ENCODE measurements at regions of chr1 and their contacts with region 1.

Region 1: GRCh38 chr1:39117899-39118455 is 86.5 kb upstream of the MACF1 start:
- DNase-seq: no peak
- H3K4me3 ChIP-seq: no peak overlapping the region
- H3K27ac ChIP-seq: no peak overlapping the region
- H3K4me1 ChIP-seq: peaks cover 10% of the 10 kb centered on the region
- H3K27me3 ChIP-seq: no peaks in the 10 kb centered on the region
- CTCF ChIP-seq: no peak

Region 2: GRCh38 chr1:39105061-39105840 is 12.7 kb before region 1 on chr1:
- CTCF ChIA-PET with region 1: no interaction called
- POLR2A ChIA-PET with region 1: no interaction called
- intact Hi-C with region 1: loop called (anchors 1 kb)
- DNase-seq: peak; percentile 77
- H3K4me3 ChIP-seq: peak overlapping the region; percentile 82
- H3K27ac ChIP-seq: peak overlapping the region; percentile 88
- H3K4me1 ChIP-seq: peaks cover 58% of the 10 kb centered on the region
- H3K27me3 ChIP-seq: no peaks in the 10 kb centered on the region
- CTCF ChIP-seq: no peak

Region 3: DNA sequence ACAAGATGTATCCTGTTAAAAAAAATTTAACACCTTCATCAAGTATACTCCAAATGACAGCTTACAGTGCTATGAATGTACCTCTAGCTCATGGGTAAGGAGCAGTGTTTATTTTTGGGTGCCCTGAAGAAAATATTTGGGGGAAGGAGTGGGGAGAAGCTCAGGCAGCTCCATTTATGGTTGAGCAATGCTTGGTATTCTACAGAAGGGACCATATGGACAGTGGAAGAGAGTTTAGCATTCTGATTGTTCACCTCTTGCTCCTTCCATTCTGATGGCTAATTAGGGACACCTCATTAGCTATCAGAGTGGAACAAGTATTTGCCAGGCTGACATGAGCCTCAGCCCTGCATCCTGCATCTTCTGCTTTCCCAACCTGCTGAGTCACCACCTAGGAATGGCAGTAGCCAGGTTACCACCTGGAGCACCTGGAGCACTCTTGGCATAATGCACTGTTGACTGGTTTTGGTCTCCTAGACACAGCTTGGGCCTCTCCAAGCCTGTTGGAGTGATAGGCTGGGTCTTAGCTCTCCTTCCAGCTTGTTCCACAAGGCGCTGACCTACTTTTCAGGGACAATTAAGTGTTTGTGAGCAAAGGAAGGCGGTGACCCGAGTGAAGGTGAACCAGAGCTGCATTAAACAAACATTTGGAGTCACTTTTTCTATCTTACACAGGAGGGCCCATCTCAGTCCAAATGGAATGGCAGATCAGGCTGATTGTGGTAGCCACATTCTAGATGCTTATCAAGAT is 24.6 kb after region 1 on chr1:
- CTCF ChIA-PET with region 1: no interaction called
- POLR2A ChIA-PET with region 1: no interaction called
- intact Hi-C with region 1: no loop called
- DNase-seq: no peak
- H3K4me3 ChIP-seq: no peak overlapping the region
- H3K27ac ChIP-seq: no peak overlapping the region
- H3K4me1 ChIP-seq: peaks cover 30% of the 10 kb centered on the region
- H3K27me3 ChIP-seq: no peaks in the 10 kb centered on the region
- CTCF ChIP-seq: no peak

Region 4: GRCh38 chr1:39183503-39184353 is 65.8 kb after region 1 on chr1:
- CTCF ChIA-PET with region 1: interaction called, 11 read pairs
- POLR2A ChIA-PET with region 1: no interaction called
- intact Hi-C with region 1: no loop called
- DNase-seq: peak; percentile 94
- H3K4me3 ChIP-seq: no peak overlapping the region
- H3K27ac ChIP-seq: peak overlapping the region; percentile 48
- H3K4me1 ChIP-seq: peaks cover 36% of the 10 kb centered on the region
- H3K27me3 ChIP-seq: no peaks in the 10 kb centered on the region
- CTCF ChIP-seq: peak; percentile 64

Measured in A673 (cell line).